Activated CD4-positive, alpha-beta T cell treated with anti-CD3 and anti-CD28 coated beads for 36 hours (primary cell): ENCODE measurements at regions of chr1 and their contacts with region 1.

Region 1: GRCh38 chr1:153922972-153923925 is at the start of gene GATAD2B:
- DNase-seq: peak; percentile 99
- ATAC-seq: peak; percentile 94
- H3K4me3 Mint-ChIP-seq: peak within 1 kb of the TSS; percentile 89
- H3K27ac Mint-ChIP-seq: peak within 1 kb of the TSS; percentile 97
- H3K4me1 Mint-ChIP-seq: peaks cover 36% of the 10 kb centered on the region
- H3K27me3 Mint-ChIP-seq: no peaks in the 10 kb centered on the region
- total RNA-seq, gene GATAD2B: 57.0 to 63.9 TPM

Region 2: GRCh38 chr1:153180556-153180955 is 742.7 kb before region 1 on chr1:
- CTCF ChIA-PET with region 1: no interaction called
- POLR2A ChIA-PET with region 1: no interaction called
- intact Hi-C with region 1: no loop called
- DNase-seq: no peak
- ATAC-seq: no peak
- H3K4me3 Mint-ChIP-seq: no peak overlapping the region
- H3K27ac Mint-ChIP-seq: no peak overlapping the region
- H3K4me1 Mint-ChIP-seq: no peaks in the 10 kb centered on the region
- H3K27me3 Mint-ChIP-seq: peaks cover 17% of the 10 kb centered on the region

Region 3: DNA sequence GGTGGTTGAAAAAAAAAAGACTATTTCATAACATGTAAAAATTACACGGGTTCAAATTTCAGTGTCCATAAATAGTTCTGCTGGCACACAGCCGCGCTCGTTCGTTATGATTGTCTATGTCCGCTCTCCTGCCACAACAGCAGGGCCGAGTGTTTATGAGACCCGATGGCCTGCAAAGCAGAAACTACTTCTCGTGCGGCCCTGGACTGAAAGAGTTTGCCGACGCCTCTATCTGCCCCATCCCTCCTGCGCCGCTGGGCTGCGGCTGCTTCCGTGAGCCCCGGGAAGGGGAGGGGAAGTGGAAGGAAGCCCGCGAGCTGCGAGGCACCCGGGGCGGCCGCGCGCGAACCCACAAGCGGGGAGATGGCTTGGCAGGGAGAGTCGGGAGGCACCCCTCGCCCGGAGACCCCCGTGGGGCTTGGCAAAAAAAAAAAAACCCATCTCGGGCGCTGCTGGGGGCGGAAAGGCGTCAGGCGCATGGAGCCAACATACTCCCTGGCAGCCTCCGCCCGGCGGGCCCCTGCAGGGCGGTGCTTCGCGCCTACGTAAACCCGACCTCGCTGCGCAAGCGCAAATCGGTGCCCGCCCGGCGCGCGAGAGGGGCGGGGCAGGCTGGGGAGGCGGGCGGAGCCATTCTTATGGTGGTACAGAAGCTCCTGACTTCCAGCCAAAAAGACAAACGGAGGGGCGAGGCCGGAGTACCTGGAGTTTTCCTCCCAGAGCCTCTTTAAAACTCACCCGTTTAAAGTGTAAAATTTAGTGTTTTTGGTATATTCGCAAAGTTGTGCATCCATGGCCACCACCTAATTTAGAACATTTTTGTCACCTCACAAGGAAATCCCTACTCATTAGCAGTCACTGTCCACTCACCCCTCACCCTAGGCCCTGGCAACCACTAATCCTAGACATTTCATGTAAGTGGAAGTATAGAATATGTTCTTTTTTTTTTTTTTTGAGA is 139.7 kb before region 1 on chr1:
- CTCF ChIA-PET with region 1: interaction called, 4 read pairs
- POLR2A ChIA-PET with region 1: interaction called, 4 read pairs
- intact Hi-C with region 1: loop called in 1 of 2 experiments (anchors 1 kb)
- DNase-seq: peak; percentile 95
- ATAC-seq: peak; percentile 96
- H3K4me3 Mint-ChIP-seq: peak overlapping the region; percentile 90
- H3K27ac Mint-ChIP-seq: peak overlapping the region; percentile 97
- H3K4me1 Mint-ChIP-seq: peaks cover 12% of the 10 kb centered on the region
- H3K27me3 Mint-ChIP-seq: no peaks in the 10 kb centered on the region

Region 4: GRCh38 chr1:153827168-153827964 is 95.9 kb before region 1 on chr1:
- CTCF ChIA-PET with region 1: interaction called, 3 read pairs
- POLR2A ChIA-PET with region 1: interaction called, 4 read pairs
- intact Hi-C with region 1: loop called in 1 of 2 experiments (anchors 5 kb)
- DNase-seq: no peak
- ATAC-seq: peak; percentile 80
- H3K4me3 Mint-ChIP-seq: no peak overlapping the region
- H3K27ac Mint-ChIP-seq: peak overlapping the region; percentile 47
- H3K4me1 Mint-ChIP-seq: peaks cover 7% of the 10 kb centered on the region
- H3K27me3 Mint-ChIP-seq: no peaks in the 10 kb centered on the region

Region 5: DNA sequence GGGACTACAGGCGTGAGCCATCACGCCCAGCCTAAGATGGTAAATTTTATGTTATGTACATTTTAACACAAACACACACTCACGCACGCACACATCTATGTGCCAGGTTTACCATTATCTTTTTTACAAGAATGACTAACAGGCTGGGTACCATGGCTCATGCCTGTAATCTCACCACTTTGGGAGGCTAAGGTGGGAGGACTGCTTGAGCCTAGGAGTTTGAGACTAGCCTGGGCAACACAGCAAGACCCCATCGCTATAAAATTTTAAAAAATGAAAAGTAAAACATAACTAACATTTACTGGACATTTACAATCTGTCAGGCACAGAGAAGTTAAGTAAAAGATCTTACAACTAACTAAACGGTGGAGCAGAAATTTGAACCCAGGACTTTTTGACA is 15.2 kb before region 1 on chr1:
- CTCF ChIA-PET with region 1: interaction called, 12 read pairs
- POLR2A ChIA-PET with region 1: interaction called, 3 read pairs
- intact Hi-C with region 1: no loop called
- DNase-seq: no peak
- ATAC-seq: no peak
- H3K4me3 Mint-ChIP-seq: no peak overlapping the region
- H3K27ac Mint-ChIP-seq: no peak overlapping the region
- H3K4me1 Mint-ChIP-seq: peaks cover 47% of the 10 kb centered on the region
- H3K27me3 Mint-ChIP-seq: no peaks in the 10 kb centered on the region

Region 6: GRCh38 chr1:153967082-153968000 is 44.1 kb after region 1 on chr1 and contains the start of gene CREB3L4:
- CTCF ChIA-PET with region 1: interaction called, 3 read pairs
- POLR2A ChIA-PET with region 1: interaction called, 6 read pairs
- intact Hi-C with region 1: loop called in 1 of 2 experiments (anchors 1 kb)
- DNase-seq: peak; percentile 91
- ATAC-seq: peak; percentile 87
- H3K4me3 Mint-ChIP-seq: peak within 1 kb of the TSS; percentile 96
- H3K27ac Mint-ChIP-seq: peak within 1 kb of the TSS; percentile 96
- H3K4me1 Mint-ChIP-seq: peaks cover 38% of the 10 kb centered on the region
- H3K27me3 Mint-ChIP-seq: no peaks in the 10 kb centered on the region
- total RNA-seq, gene CREB3L4: 8.5 to 9.1 TPM

Region 7: DNA sequence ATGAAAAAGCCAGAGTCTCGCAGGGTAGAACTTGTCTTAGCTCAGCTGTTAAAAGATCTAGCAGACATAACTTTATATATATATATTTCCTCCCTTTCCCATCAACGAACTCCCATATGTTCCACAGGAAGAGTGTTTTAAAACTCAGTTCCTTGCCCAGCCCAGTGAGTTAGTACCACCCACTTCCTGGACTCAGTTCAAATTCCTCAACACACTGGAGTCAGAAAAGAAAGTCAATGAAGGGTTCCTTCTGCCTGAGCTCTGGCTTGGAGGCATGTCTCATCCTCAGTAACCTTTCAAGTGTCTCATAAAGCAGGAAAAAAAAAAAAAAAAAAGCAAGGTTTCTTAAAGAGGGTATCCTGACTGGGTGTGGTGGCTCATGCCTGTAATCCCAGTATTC is 253.1 kb after region 1 on chr1:
- CTCF ChIA-PET with region 1: no interaction called
- POLR2A ChIA-PET with region 1: no interaction called
- intact Hi-C with region 1: no loop called
- DNase-seq: no peak
- ATAC-seq: peak; percentile 37
- H3K4me3 Mint-ChIP-seq: no peak overlapping the region
- H3K27ac Mint-ChIP-seq: peak overlapping the region; percentile 78
- H3K4me1 Mint-ChIP-seq: peaks cover 74% of the 10 kb centered on the region
- H3K27me3 Mint-ChIP-seq: no peaks in the 10 kb centered on the region

Region 8: DNA sequence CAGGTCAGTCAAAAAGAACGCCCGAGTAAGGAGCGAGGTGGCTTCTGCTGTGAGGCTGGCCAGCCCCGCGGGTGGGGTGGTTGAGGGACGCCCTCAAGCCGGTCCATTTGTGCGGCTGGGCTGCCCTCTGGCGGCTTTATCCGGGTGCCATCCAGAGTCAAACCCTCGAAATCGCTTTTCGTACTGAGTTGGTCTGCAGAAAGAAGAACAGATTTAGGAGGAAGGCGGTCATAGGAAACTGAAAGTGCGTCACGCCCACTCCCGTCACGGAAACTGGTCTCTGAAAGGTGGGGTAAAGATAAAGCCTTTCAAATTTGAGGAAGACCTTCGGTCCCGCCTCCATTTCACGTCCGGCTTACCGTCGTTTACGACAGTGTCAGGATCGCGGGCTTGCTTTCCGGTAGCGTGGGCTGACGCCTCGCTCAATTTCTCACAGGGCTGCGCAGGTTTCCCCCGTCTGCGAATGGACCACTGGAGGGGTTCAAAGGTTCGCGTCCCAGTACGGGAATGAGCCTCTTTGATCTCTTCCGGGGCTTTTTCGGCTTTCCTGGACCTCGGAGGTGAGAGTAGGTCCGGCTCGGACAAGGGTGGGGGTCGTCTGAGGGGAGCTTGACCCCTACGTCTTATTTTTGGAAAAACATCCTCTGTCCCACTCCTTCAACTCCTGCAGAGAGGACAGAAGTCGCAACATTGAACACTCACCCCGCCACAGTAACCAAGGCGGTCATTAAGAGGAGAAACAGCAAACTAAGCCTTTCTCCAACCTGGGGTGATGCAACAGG is 349.2 kb after region 1 on chr1 and contains the start of gene HAX1:
- CTCF ChIA-PET with region 1: no interaction called
- POLR2A ChIA-PET with region 1: interaction called, 3 read pairs
- intact Hi-C with region 1: loop called in 1 of 2 experiments (anchors 1 kb)
- DNase-seq: peak; percentile 99
- ATAC-seq: peak; percentile 95
- H3K4me3 Mint-ChIP-seq: peak within 1 kb of the TSS; percentile 99
- H3K27ac Mint-ChIP-seq: peak within 1 kb of the TSS; percentile 99
- H3K4me1 Mint-ChIP-seq: peaks cover 37% of the 10 kb centered on the region
- H3K27me3 Mint-ChIP-seq: no peaks in the 10 kb centered on the region
- total RNA-seq, gene HAX1: 177 to 225 TPM

Region 9: DNA sequence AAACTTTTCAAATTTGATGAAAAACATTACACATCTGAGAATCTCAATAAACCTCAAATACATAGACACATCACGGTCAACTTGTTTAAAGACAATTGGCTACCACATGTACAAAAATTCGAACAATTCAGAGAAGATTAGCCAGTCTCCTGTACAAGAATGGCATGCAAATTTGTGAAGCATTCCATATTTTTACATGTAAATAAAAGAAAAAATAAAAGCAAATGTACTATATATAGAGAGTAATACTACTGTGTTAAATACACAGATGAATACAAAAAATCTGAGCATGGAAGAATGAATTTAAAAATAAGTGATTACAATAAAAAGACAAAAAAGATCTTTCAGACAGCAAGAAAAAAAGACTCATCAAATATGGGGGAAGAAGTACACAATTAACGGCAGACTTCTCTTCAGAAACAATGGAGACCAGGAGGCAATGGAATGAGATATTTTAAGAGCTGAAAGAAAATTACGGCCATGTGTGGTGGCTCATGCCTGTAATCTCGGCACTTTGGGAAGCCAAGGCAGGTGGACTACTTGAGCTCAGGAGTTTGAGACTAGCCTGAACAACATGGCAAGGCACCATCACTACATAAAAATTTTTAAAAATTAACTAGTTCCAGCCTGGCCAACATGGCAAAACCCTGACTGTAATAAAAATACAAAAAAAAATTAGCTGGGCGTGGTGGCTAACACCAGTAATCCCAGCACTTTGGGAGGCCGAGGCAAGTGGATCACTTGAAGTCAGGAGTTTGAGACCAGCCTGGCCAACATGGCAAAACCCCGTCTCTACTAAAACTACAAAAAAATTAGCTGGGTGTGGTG is 372.4 kb after region 1 on chr1:
- CTCF ChIA-PET with region 1: no interaction called
- POLR2A ChIA-PET with region 1: no interaction called
- intact Hi-C with region 1: no loop called
- DNase-seq: no peak
- ATAC-seq: no peak
- H3K4me3 Mint-ChIP-seq: no peak overlapping the region
- H3K27ac Mint-ChIP-seq: no peak overlapping the region
- H3K4me1 Mint-ChIP-seq: no peaks in the 10 kb centered on the region
- H3K27me3 Mint-ChIP-seq: no peaks in the 10 kb centered on the region